Activated T-helper 1 cell treated with anti-CD3 and anti-CD28 coated beads, Interleukin-12 subunit alpha, Interleukin-12 subunit beta, Interleukin-2, Interleukin-4 antibody, amounts not matched to agents 30 ng/mL and 10 ng/mL and 1 ng/mL, durations not matched to agents 14 hours and 24 hours and 36 hours (primary cell): ENCODE measurements at regions of chr16 and their contacts with region 1.

Region 1: DNA sequence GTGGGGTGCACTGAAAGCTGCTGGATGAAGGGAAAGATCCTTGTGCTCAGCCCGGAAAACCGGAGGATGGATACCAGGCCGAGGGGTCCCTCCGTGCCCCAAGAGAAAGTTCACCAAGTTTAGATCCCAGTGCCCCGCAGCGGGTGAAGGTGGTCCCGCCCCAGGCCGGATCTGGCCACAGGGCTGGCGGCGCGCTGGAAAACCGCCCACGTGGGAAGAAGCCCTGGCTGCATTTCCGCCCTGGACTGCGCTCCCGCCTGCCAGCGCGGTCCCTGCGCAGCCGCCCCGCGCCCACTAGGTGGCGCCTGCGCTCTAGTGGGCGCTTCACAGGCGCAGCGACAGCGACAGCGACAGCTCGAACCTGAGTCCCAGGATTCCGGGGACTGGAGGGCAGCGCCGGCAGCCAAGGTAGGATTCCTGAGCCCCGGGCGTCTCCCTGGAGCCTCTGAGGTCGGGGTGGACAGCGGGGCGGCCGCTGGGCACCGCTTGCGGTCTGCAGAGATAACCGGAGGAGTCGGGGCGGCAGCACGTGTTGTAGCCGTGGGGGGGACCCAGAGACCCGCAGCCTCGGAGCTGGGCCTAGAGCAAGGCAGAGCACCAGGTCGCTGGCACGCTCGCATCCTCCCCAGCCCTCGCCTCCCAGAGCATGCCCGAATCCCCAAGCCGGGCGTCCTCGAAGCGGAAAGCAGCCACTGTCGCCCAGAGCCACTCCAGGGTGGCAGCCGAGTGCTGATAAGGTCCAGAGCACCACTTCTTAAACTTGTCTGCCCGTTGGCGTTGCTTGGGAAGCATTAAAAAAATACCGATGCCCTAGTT is at the start of gene CHD9:
- DNase-seq: peak; percentile 71
- H3K4me3 Mint-ChIP-seq: peak within 1 kb of the TSS; percentile 89
- H3K27ac Mint-ChIP-seq: peak within 1 kb of the TSS; percentile 84
- H3K4me1 Mint-ChIP-seq: peaks cover 25% of the 10 kb centered on the region
- H3K27me3 Mint-ChIP-seq: no peaks in the 10 kb centered on the region
- total RNA-seq, gene CHD9: 17.0 and 18.3 TPM in 2 replicates

Region 2: GRCh38 chr16:53130159-53131049 is 75.5 kb after region 1 on chr16:
- intact Hi-C with region 1: loop called (anchors 1 kb)
- DNase-seq: peak; percentile 92
- H3K4me3 Mint-ChIP-seq: peak overlapping the region; percentile 80
- H3K27ac Mint-ChIP-seq: peak overlapping the region; percentile 79
- H3K4me1 Mint-ChIP-seq: peaks cover 6% of the 10 kb centered on the region
- H3K27me3 Mint-ChIP-seq: peaks cover 9% of the 10 kb centered on the region

Region 3: GRCh38 chr16:53220585-53220984 is 165.7 kb after region 1 on chr16:
- intact Hi-C with region 1: loop called (anchors 1 kb)
- DNase-seq: no peak
- H3K4me3 Mint-ChIP-seq: no peak overlapping the region
- H3K27ac Mint-ChIP-seq: no peak overlapping the region
- H3K4me1 Mint-ChIP-seq: no peaks in the 10 kb centered on the region
- H3K27me3 Mint-ChIP-seq: no peaks in the 10 kb centered on the region

Region 4: DNA sequence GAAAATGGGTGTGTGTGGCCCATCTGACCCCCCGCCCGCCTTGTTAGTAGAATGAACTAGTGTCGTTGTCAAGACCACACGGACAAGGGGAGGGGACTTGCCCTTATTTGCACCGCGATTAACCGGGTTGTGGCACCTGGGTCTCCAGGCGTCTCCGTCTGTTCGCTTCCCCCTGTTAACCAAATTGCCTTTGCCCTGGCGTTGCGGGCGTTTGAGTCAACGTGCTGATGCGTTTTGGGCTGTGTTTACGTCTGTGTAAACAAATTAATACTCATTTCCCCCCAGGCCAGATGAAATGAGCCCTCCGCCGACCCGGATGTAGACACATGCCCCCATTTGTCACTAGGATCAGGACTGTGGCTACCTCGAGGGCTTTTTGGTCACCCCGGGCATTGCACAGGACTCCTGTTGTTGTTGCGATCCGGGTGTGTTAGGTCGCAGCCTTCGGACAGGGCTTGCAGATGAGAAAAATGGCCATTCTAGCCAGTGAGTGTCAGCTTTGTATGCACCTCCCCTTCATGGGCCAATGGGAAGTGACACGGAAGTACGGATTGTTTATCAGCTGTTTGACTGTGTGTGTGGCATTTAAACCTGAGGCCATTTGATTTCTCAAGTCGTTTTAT is 380.3 kb after region 1 on chr16:
- intact Hi-C with region 1: loop called (anchors 1 kb)
- DNase-seq: peak; percentile 63
- H3K4me3 Mint-ChIP-seq: peak overlapping the region; percentile 99
- H3K27ac Mint-ChIP-seq: peak overlapping the region; percentile 98
- H3K4me1 Mint-ChIP-seq: peaks cover 38% of the 10 kb centered on the region
- H3K27me3 Mint-ChIP-seq: no peaks in the 10 kb centered on the region

Region 5: GRCh38 chr16:53465606-53466280 is 410.9 kb after region 1 on chr16:
- intact Hi-C with region 1: no loop called
- DNase-seq: no peak
- H3K4me3 Mint-ChIP-seq: no peak overlapping the region
- H3K27ac Mint-ChIP-seq: no peak overlapping the region
- H3K4me1 Mint-ChIP-seq: peaks cover 39% of the 10 kb centered on the region
- H3K27me3 Mint-ChIP-seq: no peaks in the 10 kb centered on the region

Region 6: GRCh38 chr16:53509906-53510703 is 455.2 kb after region 1 on chr16:
- intact Hi-C with region 1: loop called (anchors 1 kb)
- DNase-seq: peak; percentile 22
- H3K4me3 Mint-ChIP-seq: no peak overlapping the region
- H3K27ac Mint-ChIP-seq: no peak overlapping the region
- H3K4me1 Mint-ChIP-seq: peaks cover 62% of the 10 kb centered on the region
- H3K27me3 Mint-ChIP-seq: no peaks in the 10 kb centered on the region